GM10248 (cell line): ENCODE measurements at regions of chr10 and their contacts with region 1.

Region 1: DNA sequence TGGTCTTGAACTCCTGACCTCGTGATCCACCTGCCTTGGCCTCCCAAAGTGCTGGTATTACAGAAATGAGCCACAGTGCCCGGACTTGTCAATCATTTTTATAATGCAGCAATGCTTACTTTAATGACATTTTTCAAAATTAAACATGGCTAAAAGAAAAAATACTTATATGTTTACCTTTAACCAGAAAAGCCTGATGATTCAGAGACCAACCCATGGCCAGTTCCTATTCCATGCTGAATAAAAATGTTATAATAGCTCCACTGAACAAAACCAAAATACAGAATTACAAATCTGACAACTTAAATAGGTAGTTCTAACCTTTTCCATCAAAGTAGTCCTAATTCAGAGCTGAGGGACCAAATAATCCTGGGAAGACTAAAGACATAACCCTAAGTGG is 21.6 kb downstream of the ZNF438 start:
- DNase-seq: no peak
- CTCF ChIP-seq: no peak

Region 2: DNA sequence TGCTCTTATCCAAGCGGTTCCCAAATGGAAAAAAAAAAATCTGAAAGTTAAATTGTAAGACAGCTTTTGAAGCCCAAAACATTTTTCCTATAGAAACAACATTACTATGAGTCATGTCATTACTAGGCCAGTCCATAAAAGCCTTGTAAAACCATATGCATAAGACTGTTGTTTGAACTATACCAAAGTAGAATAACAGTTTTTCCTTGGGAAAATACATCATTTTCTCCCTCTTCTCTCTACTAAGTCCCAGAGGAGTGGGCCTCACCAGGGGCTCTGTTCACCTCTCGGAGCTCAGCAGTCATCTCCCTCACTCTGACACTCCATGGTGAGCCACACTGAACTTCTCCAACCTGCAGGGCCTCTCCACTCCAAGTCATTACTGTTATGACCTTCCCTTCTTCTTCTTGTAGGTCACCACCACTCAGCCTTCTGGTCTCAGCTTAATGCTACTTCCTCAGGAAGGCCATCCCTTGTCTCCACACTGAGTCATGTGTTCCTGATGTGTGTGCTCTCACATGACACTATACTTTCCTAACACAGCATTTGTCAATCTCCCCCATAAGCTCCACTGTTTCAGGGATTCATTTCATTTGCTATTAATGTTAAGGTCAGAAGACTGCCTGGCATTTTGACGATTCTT is 10.9 kb before region 1 on chr10:
- CTCF ChIA-PET with region 1: interaction called, 25 read pairs
- POLR2A ChIA-PET with region 1: no interaction called
- DNase-seq: no peak
- CTCF ChIP-seq: no peak

Region 3: GRCh38 chr10:31064348-31064747 is 54.3 kb after region 1 on chr10:
- CTCF ChIA-PET with region 1: no interaction called
- POLR2A ChIA-PET with region 1: no interaction called
- DNase-seq: no peak
- CTCF ChIP-seq: no peak